WTC11 (cell line): ENCODE measurements at regions of chr10 and their contacts with region 1.

Region 1: DNA sequence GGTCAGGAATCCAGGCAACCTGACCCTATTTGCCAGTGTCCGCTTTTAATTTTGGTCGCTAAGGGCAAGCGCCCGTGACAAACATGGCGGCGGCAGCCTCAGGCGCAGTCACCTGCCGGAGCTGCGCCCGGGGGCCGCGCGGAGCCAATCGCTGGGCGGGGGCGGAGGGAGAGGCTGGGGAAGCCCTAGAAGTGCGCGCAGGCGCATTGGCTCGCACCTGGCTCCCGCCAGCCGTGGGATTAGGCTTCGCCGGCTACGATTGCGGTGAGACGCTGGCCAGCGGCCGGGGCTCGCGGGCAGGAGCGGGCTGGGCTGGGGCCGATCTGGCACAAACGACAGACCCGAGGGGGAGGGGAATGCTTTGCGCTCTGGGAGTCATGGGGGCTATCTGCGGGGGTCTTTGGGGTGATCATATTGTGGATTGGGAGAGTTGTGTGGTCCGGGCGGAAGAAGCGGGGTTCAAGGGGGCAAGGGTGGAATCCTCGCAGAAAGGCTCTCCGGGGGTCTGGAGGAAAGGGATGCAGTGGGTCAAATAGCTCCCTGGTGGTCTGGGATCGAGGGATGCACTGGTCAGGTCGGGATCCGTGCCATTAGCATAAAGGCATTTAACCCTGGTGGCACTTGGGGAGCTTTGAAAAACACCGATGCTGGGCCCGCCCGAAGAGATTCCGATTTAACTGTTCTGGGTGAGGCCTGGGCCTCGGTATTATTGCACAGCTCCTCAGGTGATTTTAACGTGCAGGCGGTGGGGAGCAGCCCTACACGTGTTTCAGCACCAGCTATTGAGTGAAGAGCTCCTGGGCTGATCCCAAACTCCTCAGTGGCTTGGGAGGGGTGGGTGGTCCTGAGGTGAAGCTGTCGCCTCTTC is 10.1 kb upstream of the C10orf95 start:
- DNase-seq: peak; percentile 98
- ATAC-seq: peak; percentile 84
- H3K4me3 Mint-ChIP-seq: peak overlapping the region; percentile 97
- H3K27ac Mint-ChIP-seq: peak overlapping the region; percentile 90
- H3K4me1 Mint-ChIP-seq: peaks cover 35% of the 10 kb centered on the region
- H3K27me3 Mint-ChIP-seq: peaks cover 2% of the 10 kb centered on the region; the same call in 1 of the 2 replicates
- CTCF ChIP-seq: no peak

Region 2: DNA sequence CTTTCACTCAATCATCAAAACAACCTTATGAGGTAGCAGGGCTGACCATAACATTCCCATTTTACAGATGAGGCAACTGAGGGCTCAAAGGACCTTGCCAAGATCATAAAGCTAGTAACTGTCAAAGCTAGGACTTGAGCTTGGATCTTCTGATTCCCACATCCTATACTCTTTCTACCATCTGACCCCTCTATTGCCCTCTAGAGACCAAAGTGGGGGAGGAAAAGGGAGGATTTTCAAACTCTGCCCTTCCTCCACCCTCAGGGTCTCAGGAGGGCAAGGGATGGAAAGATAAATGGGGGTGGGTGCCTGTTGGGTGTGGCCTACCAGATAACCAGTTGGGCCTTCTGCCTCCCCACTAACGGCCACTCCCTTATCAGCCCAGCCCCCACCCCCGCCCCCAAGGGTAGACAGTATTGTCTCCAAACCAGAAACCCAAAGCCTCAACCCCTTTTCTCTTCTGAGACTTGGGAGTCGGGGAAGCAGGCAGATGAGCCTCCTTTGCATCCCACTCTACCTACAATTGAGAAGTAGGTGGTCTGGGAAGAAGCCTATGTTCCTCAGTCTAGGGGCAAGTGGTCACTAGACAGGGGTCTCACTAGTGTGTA is 349.1 kb before region 1 on chr10:
- CTCF ChIA-PET with region 1: no interaction called
- POLR2A ChIA-PET with region 1: no interaction called
- DNase-seq: no peak
- ATAC-seq: peak; percentile 28
- H3K4me3 Mint-ChIP-seq: peak overlapping the region; percentile 88; the same call in 1 of the 2 replicates
- H3K27ac Mint-ChIP-seq: no peak overlapping the region
- H3K4me1 Mint-ChIP-seq: peaks cover 45% of the 10 kb centered on the region
- H3K27me3 Mint-ChIP-seq: no peaks in the 10 kb centered on the region
- CTCF ChIP-seq: no peak

Region 3: DNA sequence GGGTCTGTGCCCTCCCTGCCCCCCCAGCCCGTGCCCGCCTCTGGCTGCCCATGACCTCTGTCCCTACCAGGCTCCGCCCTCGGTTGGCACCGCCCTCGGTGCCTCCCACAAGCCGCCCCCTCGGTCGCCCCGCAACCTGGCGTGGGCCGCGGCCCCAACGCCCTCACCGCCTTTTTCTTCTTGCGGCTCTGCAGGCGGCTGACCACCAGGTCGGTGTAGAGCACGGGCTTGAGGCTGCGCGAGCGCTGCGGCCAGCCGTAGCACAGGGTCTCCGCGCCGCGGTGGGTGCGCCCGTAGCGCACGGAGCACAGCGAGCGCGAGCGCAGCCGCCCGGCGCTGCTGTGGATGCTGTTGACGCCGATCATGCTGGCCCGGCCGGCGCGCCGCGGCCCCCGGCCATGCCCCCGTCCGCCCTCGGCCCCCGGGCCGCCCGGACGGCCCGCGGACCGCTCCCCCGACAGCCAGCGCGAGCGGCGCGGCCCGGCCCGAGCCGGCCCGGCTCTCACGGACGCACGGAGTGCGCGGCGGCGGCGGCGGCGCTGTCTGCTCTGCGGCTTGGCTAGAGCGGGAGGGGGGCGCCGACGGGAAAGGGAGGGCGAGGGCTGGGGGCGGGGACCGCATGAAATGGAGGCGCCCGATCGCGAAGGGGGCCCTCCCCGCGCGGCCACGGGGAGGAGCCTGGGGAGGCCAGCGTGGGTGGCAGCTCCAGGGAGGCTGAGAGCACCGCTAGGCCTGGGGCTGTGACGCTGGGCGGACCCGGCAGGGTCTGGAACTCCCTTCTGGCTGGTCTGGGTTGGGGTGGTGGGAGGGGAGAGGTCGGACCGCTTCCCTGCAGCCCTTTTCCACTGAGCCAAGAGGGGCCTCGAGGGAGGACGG is 52.5 kb before region 1 on chr10:
- CTCF ChIA-PET with region 1: interaction called, 10 read pairs
- POLR2A ChIA-PET with region 1: interaction called, 3 read pairs
- DNase-seq: peak; percentile 55
- ATAC-seq: peak; percentile 29
- H3K4me3 Mint-ChIP-seq: peak overlapping the region; percentile 69
- H3K27ac Mint-ChIP-seq: no peak overlapping the region
- H3K4me1 Mint-ChIP-seq: peaks cover 30% of the 10 kb centered on the region
- H3K27me3 Mint-ChIP-seq: peaks cover 67% of the 10 kb centered on the region
- CTCF ChIP-seq: no peak

Region 4: GRCh38 chr10:102432162-102432950 is 29.1 kb before region 1 on chr10 and contains the start of gene CUEDC2:
- CTCF ChIA-PET with region 1: interaction called, 10 read pairs
- POLR2A ChIA-PET with region 1: interaction called, 7 read pairs
- DNase-seq: peak; percentile 99
- ATAC-seq: peak; percentile 90
- H3K4me3 Mint-ChIP-seq: peak within 1 kb of the TSS; percentile 95
- H3K27ac Mint-ChIP-seq: peak within 1 kb of the TSS; percentile 57
- H3K4me1 Mint-ChIP-seq: peaks cover 18% of the 10 kb centered on the region
- H3K27me3 Mint-ChIP-seq: peaks cover 57% of the 10 kb centered on the region
- CTCF ChIP-seq: no peak
- total RNA-seq, gene CUEDC2: 40.2 to 69.0 TPM (median 65.8 TPM) in 3 replicates

Region 5: GRCh38 chr10:102450194-102450938 is 11.1 kb before region 1 on chr10:
- CTCF ChIA-PET with region 1: interaction called, 16 read pairs
- POLR2A ChIA-PET with region 1: interaction called, 37 read pairs
- DNase-seq: peak; percentile 80
- ATAC-seq: peak; percentile 52
- H3K4me3 Mint-ChIP-seq: peak overlapping the region; percentile 93
- H3K27ac Mint-ChIP-seq: peak overlapping the region; percentile 83
- H3K4me1 Mint-ChIP-seq: peaks cover 39% of the 10 kb centered on the region
- H3K27me3 Mint-ChIP-seq: no peaks in the 10 kb centered on the region
- CTCF ChIP-seq: no peak

Region 6: GRCh38 chr10:102485093-102485784 is 23.8 kb after region 1 on chr10:
- CTCF ChIA-PET with region 1: interaction called, 18 read pairs
- POLR2A ChIA-PET with region 1: no interaction called
- DNase-seq: no peak
- ATAC-seq: no peak
- H3K4me3 Mint-ChIP-seq: no peak overlapping the region
- H3K27ac Mint-ChIP-seq: no peak overlapping the region
- H3K4me1 Mint-ChIP-seq: no peaks in the 10 kb centered on the region
- H3K27me3 Mint-ChIP-seq: no peaks in the 10 kb centered on the region
- CTCF ChIP-seq: no peak

Region 7: GRCh38 chr10:102503281-102504220 is 42.1 kb after region 1 on chr10 and contains the start of gene SUFU:
- CTCF ChIA-PET with region 1: interaction called, 16 read pairs
- POLR2A ChIA-PET with region 1: no interaction called
- DNase-seq: peak; percentile 98
- ATAC-seq: peak; percentile 74
- H3K4me3 Mint-ChIP-seq: peak within 1 kb of the TSS; percentile 95
- H3K27ac Mint-ChIP-seq: peak within 1 kb of the TSS; percentile 41; the same call in 1 of the 2 replicates
- H3K4me1 Mint-ChIP-seq: peaks cover 8% of the 10 kb centered on the region; the same call in 1 of the 2 replicates
- H3K27me3 Mint-ChIP-seq: peaks cover 12% of the 10 kb centered on the region
- CTCF ChIP-seq: peak; percentile 70
- total RNA-seq, gene SUFU: 11.6 to 13.1 TPM (median 12.8 TPM) in 3 replicates